CD4-positive, alpha-beta memory T cell (primary cell): ENCODE measurements at regions of chr1 and their contacts with region 1.

Region 1: DNA sequence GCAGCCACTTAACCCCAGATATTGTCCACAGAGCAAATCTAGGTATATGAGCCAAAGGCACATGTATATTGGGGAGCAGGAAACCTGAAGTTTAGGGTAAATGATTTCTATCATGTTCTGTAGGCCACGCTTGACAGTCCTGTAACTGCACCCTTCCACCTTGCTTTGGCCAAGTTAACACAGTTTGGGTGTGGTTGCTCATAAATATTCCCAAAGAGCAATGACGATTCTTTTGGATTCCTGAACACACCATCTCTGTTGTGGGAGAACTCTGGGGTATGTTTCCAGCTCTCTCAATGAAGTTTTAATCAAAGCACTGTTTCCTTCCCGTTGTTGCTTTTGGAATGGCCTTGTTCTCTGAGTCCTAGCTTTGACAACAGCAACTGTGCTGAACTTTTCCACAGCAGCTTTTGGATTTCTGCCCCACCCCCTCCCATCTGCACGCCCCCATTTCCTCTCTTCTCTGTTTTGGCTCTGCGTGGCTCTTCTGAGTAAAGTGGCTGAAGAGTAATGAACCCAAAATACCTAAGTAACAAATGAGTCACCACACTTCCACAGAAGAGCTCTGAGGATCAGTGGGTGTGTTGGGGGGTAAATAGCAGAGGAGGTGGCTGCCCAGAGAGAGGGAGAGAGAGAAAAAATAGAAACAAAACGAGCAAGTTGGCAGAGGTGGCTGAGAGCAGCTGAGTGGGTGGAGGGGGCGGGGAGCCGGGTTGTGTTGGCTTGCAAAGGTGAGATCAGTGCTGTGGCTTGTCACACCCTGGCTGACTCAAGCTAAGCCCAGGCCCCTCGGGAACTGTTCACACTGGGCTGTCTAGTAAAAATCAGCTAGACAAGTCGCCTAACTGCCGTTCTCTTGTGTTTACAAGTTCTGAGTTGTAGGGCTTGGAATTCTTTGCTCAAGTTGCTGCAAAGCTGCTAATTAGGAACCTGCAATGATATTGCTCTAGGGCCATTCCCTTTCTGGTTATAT is 26.9 kb upstream of the RAP1A start:
- DNase-seq: peak; percentile 66 to 98 (median 77)
- H3K4me3 ChIP-seq: peak overlapping the region in 1 of 2 donors; percentile 15
- H3K4me3 Mint-ChIP-seq: peak overlapping the region; percentile 6 to 81 (median 69)
- H3K27ac ChIP-seq: peak overlapping the region; percentile 46
- H3K27ac Mint-ChIP-seq: peak overlapping the region; percentile 85 to 94 (median 92)
- H3K4me1 ChIP-seq: peaks cover 68% of the 10 kb centered on the region
- H3K4me1 Mint-ChIP-seq: peaks cover 48 to 57% (median 51%) of the 10 kb centered on the region in 4 donors
- H3K27me3 ChIP-seq: no peaks in the 10 kb centered on the region
- H3K27me3 Mint-ChIP-seq: no peaks in the 10 kb centered on the region

Region 2: DNA sequence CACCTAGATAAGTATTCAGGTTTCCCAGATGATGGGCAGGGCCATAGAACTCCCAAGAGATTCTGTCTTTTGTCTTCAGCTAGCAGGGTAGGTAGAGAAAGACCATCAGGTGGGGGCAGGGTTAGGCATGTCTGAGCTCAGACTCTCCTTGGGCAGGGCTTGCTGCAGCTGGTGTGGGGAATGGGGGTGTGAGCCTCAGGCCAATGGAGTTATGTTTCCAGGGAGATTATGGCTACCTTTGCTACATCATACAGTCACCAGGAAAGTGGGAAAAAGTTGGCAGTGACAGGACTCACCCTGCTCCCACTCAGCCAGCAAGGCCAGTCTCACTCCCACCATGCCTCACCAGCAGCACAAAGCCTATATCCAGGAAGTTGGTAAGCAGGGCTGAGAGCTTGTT is 530.6 kb before region 1 on chr1:
- CTCF ChIA-PET with region 1: no interaction called
- POLR2A ChIA-PET with region 1: no interaction called
- intact Hi-C with region 1: no loop called
- DNase-seq: no peak
- H3K4me3 ChIP-seq: no peak overlapping the region
- H3K4me3 Mint-ChIP-seq: no peak overlapping the region
- H3K27ac ChIP-seq: no peak overlapping the region
- H3K27ac Mint-ChIP-seq: no peak overlapping the region
- H3K4me1 ChIP-seq: no peaks in the 10 kb centered on the region
- H3K4me1 Mint-ChIP-seq: no peaks in the 10 kb centered on the region
- H3K27me3 ChIP-seq: no peaks in the 10 kb centered on the region
- H3K27me3 Mint-ChIP-seq: peaks cover 9 to 23% of the 10 kb centered on the region in 2 donors

Region 3: DNA sequence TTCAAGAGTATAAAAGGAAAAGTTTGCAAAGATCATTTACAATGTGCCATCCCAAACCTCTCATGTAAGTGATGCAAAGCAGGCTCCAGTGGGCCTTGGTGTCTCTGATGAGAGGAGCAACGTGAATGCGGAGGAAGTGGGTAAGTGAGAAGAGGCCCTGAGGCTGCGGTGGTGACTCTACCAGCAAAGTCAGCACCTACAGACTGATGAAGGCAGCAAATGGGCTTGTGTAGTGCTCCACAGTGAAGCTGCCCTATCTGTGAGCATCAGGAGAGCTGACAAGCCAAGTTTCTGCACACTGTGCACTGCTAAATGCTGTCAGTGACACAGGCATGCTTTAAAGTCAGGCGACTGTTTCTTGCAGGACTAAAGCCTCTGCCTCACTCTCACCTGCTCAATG is 11.3 kb after region 1 on chr1:
- CTCF ChIA-PET with region 1: interaction called, 27 read pairs
- POLR2A ChIA-PET with region 1: interaction called, 144 read pairs
- intact Hi-C with region 1: loop called (anchors 1 kb)
- DNase-seq: peak; percentile 80 to 91 (median 85)
- H3K4me3 ChIP-seq: no peak overlapping the region
- H3K4me3 Mint-ChIP-seq: peak overlapping the region; percentile 26 to 89 (median 72)
- H3K27ac ChIP-seq: peak overlapping the region; percentile 27
- H3K27ac Mint-ChIP-seq: peak overlapping the region; percentile 85 to 97 (median 91)
- H3K4me1 ChIP-seq: peaks cover 78% of the 10 kb centered on the region
- H3K4me1 Mint-ChIP-seq: peaks cover 58 to 80% (median 73%) of the 10 kb centered on the region in 4 donors
- H3K27me3 ChIP-seq: no peaks in the 10 kb centered on the region
- H3K27me3 Mint-ChIP-seq: no peaks in the 10 kb centered on the region

Region 4: DNA sequence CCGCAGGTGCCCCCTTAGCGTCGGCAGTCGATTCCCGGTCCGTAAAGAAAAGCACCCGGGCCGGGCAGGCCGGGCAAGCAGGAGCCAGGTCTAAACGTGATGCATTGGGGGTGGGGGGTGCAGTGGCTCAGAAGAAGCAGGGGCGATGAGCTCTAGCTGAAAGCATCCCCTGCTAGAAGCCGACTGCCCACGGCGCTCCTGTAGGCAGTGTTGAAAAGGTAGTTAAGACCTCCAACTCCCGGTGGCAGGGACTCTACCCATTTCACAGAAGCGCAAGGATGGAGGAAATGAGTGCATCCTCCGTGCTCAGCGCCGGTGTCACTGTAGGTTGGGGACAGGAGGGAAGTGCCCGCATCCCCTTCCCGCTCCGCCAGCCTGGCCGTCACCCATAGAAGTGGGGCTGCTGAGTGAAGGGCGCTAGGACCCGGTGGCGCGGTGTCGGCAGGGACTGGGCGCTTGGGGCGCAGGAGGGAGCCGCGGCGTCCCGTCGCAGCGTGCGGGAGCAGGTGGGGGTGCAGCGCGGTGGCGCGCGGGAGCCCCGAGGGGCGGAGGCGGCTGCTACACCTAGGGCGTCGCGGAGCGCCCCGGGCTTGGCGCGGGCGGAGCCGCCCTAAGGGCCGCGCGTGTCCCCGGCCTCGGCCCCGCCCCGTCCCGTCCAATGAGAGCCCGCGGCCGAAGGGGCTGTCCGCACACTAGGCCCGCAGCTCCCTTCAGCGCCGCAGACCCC is 915.8 kb after region 1 on chr1 and contains the start of gene WNT2B:
- CTCF ChIA-PET with region 1: no interaction called
- POLR2A ChIA-PET with region 1: no interaction called
- intact Hi-C with region 1: no loop called
- DNase-seq: peak; percentile 55 to 63 (median 62)
- H3K4me3 ChIP-seq: peak within 1 kb of the TSS; percentile 52 to 67
- H3K4me3 Mint-ChIP-seq: peak within 1 kb of the TSS; percentile 84 to 93 (median 86)
- H3K27ac ChIP-seq: no peak within 1 kb of the TSS
- H3K27ac Mint-ChIP-seq: peak within 1 kb of the TSS in 6 of 7 donors; percentile 2 to 64 (median 62)
- H3K4me1 ChIP-seq: peaks cover 13% of the 10 kb centered on the region
- H3K4me1 Mint-ChIP-seq: peaks cover 0 to 20% (median 3%) of the 10 kb centered on the region in 4 donors
- H3K27me3 ChIP-seq: peaks cover 6% of the 10 kb centered on the region
- H3K27me3 Mint-ChIP-seq: peaks cover 7 to 11% of the 10 kb centered on the region in 2 donors
- total RNA-seq, gene WNT2B: 0.70 to 0.91 TPM